Adrenal gland (tissue), 19 donors: ENCODE measurements at regions of chr13 and their contacts with region 1.

Region 1: GRCh38 chr13:77779552-77780272 is 82.2 kb downstream of the SLAIN1 start:
- DNase-seq: peak; percentile 23 to 68 (median 40)
- H3K4me3 ChIP-seq: peak overlapping the region in 1 of 4 donors; percentile 2
- H3K27ac ChIP-seq: no peak overlapping the region
- H3K4me1 ChIP-seq: peaks cover 0 to 6% of the 10 kb centered on the region in 2 donors
- H3K27me3 ChIP-seq: no peaks in the 10 kb centered on the region
- CTCF ChIP-seq: peak; percentile 46 to 81 (median 74)
- POLR2A ChIP-seq: no peak

Region 2: DNA sequence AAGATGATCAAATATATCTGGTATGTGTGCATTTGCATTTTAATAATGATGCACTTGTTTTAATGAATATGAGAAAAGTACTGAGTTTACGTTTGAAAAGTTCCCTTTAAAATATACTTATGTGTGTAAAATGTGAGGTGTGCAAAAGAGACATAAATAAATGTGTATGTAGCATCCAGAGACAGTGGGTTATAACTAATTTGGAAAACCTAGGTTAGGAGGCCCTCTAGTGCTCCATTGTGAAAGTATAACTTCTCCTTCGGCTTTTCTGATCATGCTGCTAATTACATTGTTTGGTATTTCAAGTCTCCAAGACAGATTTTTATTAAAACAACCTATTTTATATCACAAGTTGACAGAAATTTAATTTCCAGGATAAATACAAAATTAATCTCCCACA is 214.1 kb before region 1 on chr13:
- intact Hi-C with region 1: no loop called
- DNase-seq: no peak
- H3K4me3 ChIP-seq: no peak overlapping the region
- H3K27ac ChIP-seq: no peak overlapping the region
- H3K4me1 ChIP-seq: no peaks in the 10 kb centered on the region
- H3K27me3 ChIP-seq: no peaks in the 10 kb centered on the region
- CTCF ChIP-seq: peak; percentile 39 to 61 (median 56)
- POLR2A ChIP-seq: no peak

Region 3: GRCh38 chr13:78121459-78122348 is 342.0 kb after region 1 on chr13:
- intact Hi-C with region 1: loop called (anchors 5 kb)
- DNase-seq: peak; percentile 33 to 79 (median 49)
- H3K4me3 ChIP-seq: peak overlapping the region in 1 of 4 donors; percentile 30
- H3K27ac ChIP-seq: no peak overlapping the region
- H3K4me1 ChIP-seq: no peaks in the 10 kb centered on the region
- H3K27me3 ChIP-seq: no peaks in the 10 kb centered on the region
- CTCF ChIP-seq: peak; percentile 79 to 89 (median 84)
- POLR2A ChIP-seq: no peak

Region 4: DNA sequence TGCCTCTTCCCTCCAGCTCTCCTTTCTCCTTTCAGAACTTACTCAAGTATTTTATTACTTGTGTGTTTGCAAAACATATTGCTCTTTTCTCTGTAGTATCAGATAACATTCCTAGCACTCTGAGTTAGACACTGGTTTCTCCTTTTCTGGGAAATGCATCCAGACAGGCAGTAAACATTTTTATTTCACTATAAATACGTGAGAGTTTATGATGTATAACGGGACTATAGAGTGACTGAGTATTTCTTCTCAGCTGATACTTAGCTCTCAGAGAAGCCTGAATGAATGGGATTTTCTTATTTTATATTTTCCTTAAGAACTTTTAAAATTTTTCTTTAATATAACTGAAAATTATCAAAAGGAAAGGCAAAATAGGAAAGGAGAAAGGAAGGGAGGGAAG is 350.1 kb after region 1 on chr13:
- intact Hi-C with region 1: loop called in 1 of 2 experiments (anchors 5 kb)
- DNase-seq: no peak
- H3K4me3 ChIP-seq: no peak overlapping the region
- H3K27ac ChIP-seq: no peak overlapping the region
- H3K4me1 ChIP-seq: no peaks in the 10 kb centered on the region
- H3K27me3 ChIP-seq: no peaks in the 10 kb centered on the region
- CTCF ChIP-seq: no peak
- POLR2A ChIP-seq: no peak